GM12878 (cell line): ENCODE measurements at regions of chr7 and their contacts with region 1.

Region 1: DNA sequence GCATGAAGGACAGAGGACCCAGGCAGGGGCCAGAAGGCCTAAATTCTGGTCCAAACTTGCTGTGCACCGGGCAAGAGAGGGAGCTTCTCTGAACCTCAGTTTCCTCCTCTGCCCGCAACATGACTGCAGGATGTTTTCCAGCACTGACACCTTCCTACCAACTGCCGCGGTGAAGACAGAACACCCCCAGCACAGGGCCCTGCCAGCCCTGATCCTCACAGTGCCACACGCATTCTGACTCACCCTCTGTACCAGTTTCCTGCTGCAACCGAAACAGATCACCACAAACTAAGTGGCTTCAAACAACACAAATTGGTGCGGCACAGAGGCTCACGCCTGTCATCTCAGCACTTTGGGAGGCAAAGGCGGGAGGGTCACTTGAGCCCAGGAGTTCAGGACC is 18.1 kb downstream of the MAD1L1 start:
- DNase-seq: no peak
- ATAC-seq: no peak
- H3K4me3 ChIP-seq: no peak overlapping the region
- H3K27ac ChIP-seq: no peak overlapping the region
- H3K4me1 ChIP-seq: peaks cover 5% of the 10 kb centered on the region
- H3K27me3 ChIP-seq: no peaks in the 10 kb centered on the region
- CTCF ChIP-seq: no peak
- EP300 ChIP-seq: no peak
- POLR2A ChIP-seq: no peak
- RAD21 ChIP-seq: no peak

Region 2: DNA sequence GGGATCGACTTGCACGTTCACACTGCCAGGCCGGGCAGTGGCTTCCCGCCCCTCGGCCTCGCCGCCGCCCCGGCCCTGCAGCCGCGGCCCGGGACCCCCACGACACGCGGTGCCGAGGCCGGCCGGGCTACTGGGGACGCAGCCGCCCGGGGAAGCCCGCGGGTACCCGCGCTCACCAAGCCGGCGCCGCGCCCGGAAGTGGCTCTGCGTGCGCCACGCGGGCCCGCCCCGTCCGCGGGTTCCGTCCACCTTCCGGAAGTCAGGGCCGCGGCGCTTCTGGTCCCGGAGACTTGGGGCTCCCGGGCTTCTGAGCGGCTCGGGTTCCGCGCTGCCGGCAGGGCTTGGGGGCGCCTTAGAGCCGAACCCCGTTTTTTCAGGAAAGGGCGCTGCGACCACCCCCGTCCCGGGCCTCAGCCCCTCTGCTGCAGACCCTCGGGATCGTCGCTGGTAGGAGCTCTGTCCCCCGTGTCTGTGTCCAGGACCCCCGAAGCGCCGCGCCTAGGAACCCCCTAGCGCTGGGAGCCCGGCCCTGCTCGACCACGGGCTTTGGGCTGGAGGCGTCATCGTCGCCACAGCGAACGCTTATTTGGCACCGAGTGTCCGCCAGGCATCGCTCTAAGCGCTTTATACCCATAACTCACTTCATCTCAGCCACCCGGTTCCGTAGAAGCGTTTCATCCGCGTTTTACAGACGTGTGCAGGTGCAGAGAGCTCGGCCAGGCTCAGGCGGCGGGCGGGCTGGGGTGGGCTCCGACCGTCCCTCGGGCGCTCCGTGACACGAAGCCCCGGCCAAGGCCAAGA is 644.6 kb before region 1 on chr7 and contains the start of gene PSMG3:
- CTCF ChIA-PET with region 1: no interaction called
- POLR2A ChIA-PET with region 1: no interaction called
- RAD21 ChIA-PET with region 1: no interaction called
- SMC1A ChIA-PET with region 1: no interaction called
- in situ Hi-C with region 1: loop called (anchors 5 kb)
- intact Hi-C with region 1: no loop called
- DNase-seq: peak; percentile 32
- ATAC-seq: peak; percentile 94
- H3K4me3 ChIP-seq: peak within 1 kb of the TSS; percentile 97
- H3K27ac ChIP-seq: peak within 1 kb of the TSS; percentile 91
- H3K4me1 ChIP-seq: no peaks in the 10 kb centered on the region; the same call in 1 of the 2 replicates
- H3K27me3 ChIP-seq: no peaks in the 10 kb centered on the region
- CTCF ChIP-seq: peak; percentile 11 to 35 (median 27); a peak in 4 of 6 replicates
- EP300 ChIP-seq: no peak
- POLR2A ChIP-seq: peak; percentile 80
- RAD21 ChIP-seq: no peak
- polyA plus RNA-seq, gene PSMG3: 23.9 to 40.5 TPM

Region 3: GRCh38 chr7:1664711-1665548 is 549.7 kb before region 1 on chr7:
- CTCF ChIA-PET with region 1: interaction called, 3 read pairs
- POLR2A ChIA-PET with region 1: no interaction called
- RAD21 ChIA-PET with region 1: no interaction called
- SMC1A ChIA-PET with region 1: no interaction called
- in situ Hi-C with region 1: loop called (anchors 10 kb)
- intact Hi-C with region 1: loop called (anchors 5 kb)
- DNase-seq: no peak
- ATAC-seq: peak; percentile 38; the same call in 2 of the 3 replicates
- H3K4me3 ChIP-seq: peak overlapping the region; percentile 27; the same call in 1 of the 2 replicates
- H3K27ac ChIP-seq: no peak overlapping the region
- H3K4me1 ChIP-seq: no peaks in the 10 kb centered on the region
- H3K27me3 ChIP-seq: peaks cover 1 to 6% of the 10 kb centered on the region in 2 experiments; a peak in 2 of 4 replicates
- CTCF ChIP-seq: peak; percentile 54 to 64 (median 63)
- EP300 ChIP-seq: no peak
- POLR2A ChIP-seq: no peak
- RAD21 ChIP-seq: peak; percentile 71

Region 4: GRCh38 chr7:2405601-2406345 is 191.1 kb after region 1 on chr7:
- CTCF ChIA-PET with region 1: no interaction called
- POLR2A ChIA-PET with region 1: no interaction called
- RAD21 ChIA-PET with region 1: no interaction called
- SMC1A ChIA-PET with region 1: no interaction called
- in situ Hi-C with region 1: no loop called
- intact Hi-C with region 1: no loop called
- DNase-seq: peak; percentile 89
- ATAC-seq: peak; percentile 70
- H3K4me3 ChIP-seq: peak overlapping the region; percentile 70
- H3K27ac ChIP-seq: peak overlapping the region; percentile 84
- H3K4me1 ChIP-seq: peaks cover 44% of the 10 kb centered on the region
- H3K27me3 ChIP-seq: no peaks in the 10 kb centered on the region
- CTCF ChIP-seq: no peak
- EP300 ChIP-seq: peak; percentile 65 to 84; a peak in 2 of 4 replicates
- POLR2A ChIP-seq: peak; percentile 73
- RAD21 ChIP-seq: no peak

Region 5: GRCh38 chr7:2680792-2681490 is 466.3 kb after region 1 on chr7:
- CTCF ChIA-PET with region 1: no interaction called
- POLR2A ChIA-PET with region 1: no interaction called
- RAD21 ChIA-PET with region 1: no interaction called
- SMC1A ChIA-PET with region 1: no interaction called
- in situ Hi-C with region 1: no loop called
- intact Hi-C with region 1: no loop called
- DNase-seq: no peak
- ATAC-seq: peak; percentile 91
- H3K4me3 ChIP-seq: no peak overlapping the region
- H3K27ac ChIP-seq: no peak overlapping the region
- H3K4me1 ChIP-seq: no peaks in the 10 kb centered on the region
- H3K27me3 ChIP-seq: no peaks in the 10 kb centered on the region; a peak in 1 of 4 replicates
- CTCF ChIP-seq: peak; percentile 64 to 72 (median 72)
- EP300 ChIP-seq: no peak
- POLR2A ChIP-seq: no peak
- RAD21 ChIP-seq: peak; percentile 70